ENCODE measurements at regions of chr19 and their contacts with region 1.

Region 1: GRCh38 chr19:19732579-19733501 is at the start of gene ZNF14:
- DNase-seq: peak; percentile 79
- ATAC-seq: peak; percentile 99
- H3K4me3 Mint-ChIP-seq: peak within 1 kb of the TSS; percentile 99
- H3K27ac Mint-ChIP-seq: peak within 1 kb of the TSS; percentile 96
- H3K4me1 Mint-ChIP-seq: peaks cover 28% of the 10 kb centered on the region
- H3K27me3 Mint-ChIP-seq: no peaks in the 10 kb centered on the region
- CTCF ChIP-seq: no peak
- total RNA-seq, gene ZNF14: 11.8 and 13.4 TPM in 2 replicates

Region 2: DNA sequence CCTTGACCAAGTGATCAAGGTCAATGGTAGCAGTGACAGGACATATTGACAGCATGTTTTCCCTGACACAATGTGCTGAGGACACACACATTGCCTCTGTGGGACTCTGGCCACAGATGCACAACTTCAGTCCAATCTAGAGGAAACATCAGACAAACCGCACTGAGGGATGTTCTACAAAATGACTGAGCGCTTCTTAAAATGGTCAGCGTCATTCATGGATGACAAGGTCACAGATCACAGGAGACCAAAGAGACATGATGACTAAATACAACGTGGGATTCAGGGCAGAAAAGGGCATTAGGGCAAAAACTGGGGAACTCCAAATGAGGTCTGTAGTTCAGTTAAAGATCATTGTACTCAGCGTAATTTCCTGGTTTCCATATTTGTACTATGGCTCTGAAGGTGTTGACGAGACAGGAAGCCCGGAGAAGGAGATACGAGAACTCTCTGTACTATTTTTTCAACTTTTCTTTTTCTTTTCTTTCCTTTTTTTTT is 135.0 kb before region 1 on chr19:
- CTCF ChIA-PET with region 1: no interaction called
- POLR2A ChIA-PET with region 1: no interaction called
- intact Hi-C with region 1: no loop called
- DNase-seq: no peak
- ATAC-seq: peak; percentile 80
- H3K4me3 Mint-ChIP-seq: peak overlapping the region; percentile 62
- H3K27ac Mint-ChIP-seq: peak overlapping the region; percentile 89
- H3K4me1 Mint-ChIP-seq: peaks cover 67% of the 10 kb centered on the region
- H3K27me3 Mint-ChIP-seq: no peaks in the 10 kb centered on the region
- CTCF ChIP-seq: no peak

Region 3: DNA sequence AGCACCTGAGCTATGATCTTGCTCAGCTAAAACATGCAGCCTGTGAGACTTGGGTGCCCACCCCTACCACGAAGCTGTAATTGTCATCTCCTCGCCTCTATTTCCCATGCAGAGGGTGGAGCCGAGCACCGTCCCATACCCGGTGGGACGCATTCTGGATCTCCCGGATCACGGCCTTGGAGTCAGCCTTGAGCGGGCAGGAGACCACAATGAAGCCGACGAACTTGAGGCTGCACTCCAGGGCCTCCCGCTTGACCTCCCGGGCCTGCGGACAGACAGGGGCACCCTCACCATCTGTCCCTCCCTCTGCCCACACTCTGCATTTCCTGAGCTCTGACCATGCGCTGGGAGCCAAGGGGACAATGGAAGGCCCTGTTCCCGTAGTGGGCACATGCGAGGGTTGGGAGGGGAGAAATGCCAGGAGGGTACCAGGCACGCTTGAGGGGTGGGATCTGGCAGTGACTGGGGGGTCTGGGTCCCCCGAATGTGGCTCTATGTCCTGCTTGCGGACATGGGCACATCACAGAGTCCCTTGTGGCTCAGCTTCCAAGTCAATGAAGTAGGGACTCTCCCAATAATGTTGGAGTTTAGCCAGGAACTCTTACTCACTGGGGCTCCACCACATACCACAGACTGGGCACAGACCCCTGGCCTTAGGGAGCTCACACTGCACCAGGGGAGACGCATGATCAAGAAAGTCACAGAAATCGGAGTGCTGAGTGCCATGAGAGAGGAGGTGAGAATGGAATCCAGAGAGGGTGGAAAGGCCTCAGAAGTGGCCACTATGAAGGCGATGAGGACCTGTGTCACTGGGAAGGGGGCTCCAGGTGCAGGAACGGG is 80.2 kb before region 1 on chr19:
- CTCF ChIA-PET with region 1: no interaction called
- POLR2A ChIA-PET with region 1: no interaction called
- intact Hi-C with region 1: no loop called
- DNase-seq: no peak
- ATAC-seq: no peak
- H3K4me3 Mint-ChIP-seq: no peak overlapping the region
- H3K27ac Mint-ChIP-seq: no peak overlapping the region
- H3K4me1 Mint-ChIP-seq: no peaks in the 10 kb centered on the region
- H3K27me3 Mint-ChIP-seq: no peaks in the 10 kb centered on the region
- CTCF ChIP-seq: no peak

Region 4: DNA sequence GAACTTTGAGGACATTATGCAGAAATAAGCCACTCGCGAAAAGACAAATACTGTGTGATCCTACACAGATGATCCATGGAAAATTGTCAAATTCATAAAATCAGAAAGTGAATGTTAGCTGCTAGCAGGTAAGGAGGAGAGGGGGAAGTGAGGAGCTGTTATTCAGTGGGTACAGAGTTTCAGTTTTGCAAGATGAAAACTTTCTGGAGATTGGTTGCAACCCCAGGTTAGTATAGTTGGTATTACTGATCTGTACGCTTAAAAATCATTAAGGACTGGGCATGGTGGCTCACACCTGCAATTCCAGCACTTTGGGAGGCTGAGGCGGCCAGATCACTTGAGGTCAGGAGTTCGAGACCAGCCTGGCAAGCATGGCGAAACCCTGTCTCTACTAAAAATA is 46.3 kb before region 1 on chr19:
- CTCF ChIA-PET with region 1: no interaction called
- POLR2A ChIA-PET with region 1: no interaction called
- intact Hi-C with region 1: no loop called
- DNase-seq: no peak
- ATAC-seq: no peak
- H3K4me3 Mint-ChIP-seq: no peak overlapping the region
- H3K27ac Mint-ChIP-seq: no peak overlapping the region
- H3K4me1 Mint-ChIP-seq: no peaks in the 10 kb centered on the region
- H3K27me3 Mint-ChIP-seq: no peaks in the 10 kb centered on the region
- CTCF ChIP-seq: no peak

Region 5: GRCh38 chr19:19900729-19901444 is 168.0 kb after region 1 on chr19 and contains the start of gene ZNF93:
- CTCF ChIA-PET with region 1: no interaction called
- POLR2A ChIA-PET with region 1: interaction called, 20 read pairs
- intact Hi-C with region 1: loop called (anchors 2 kb)
- DNase-seq: peak; percentile 74
- ATAC-seq: peak; percentile 97
- H3K4me3 Mint-ChIP-seq: peak within 1 kb of the TSS; percentile 98
- H3K27ac Mint-ChIP-seq: peak within 1 kb of the TSS; percentile 91
- H3K4me1 Mint-ChIP-seq: peaks cover 34% of the 10 kb centered on the region
- H3K27me3 Mint-ChIP-seq: no peaks in the 10 kb centered on the region
- CTCF ChIP-seq: no peak
- total RNA-seq, gene ZNF93: 13.5 and 14.9 TPM in 2 replicates

Measured in activated B cell treated with CpG ODN at 0.5 μM for 24 hours (primary cell).